WTC11 (cell line): ENCODE measurements at regions of chr1 and their contacts with region 1.

Region 1: GRCh38 chr1:205141236-205142101 is 19.7 kb upstream of the RBBP5 start:
- DNase-seq: peak; percentile 83
- ATAC-seq: peak; percentile 74
- H3K4me3 Mint-ChIP-seq: no peak overlapping the region
- H3K27ac Mint-ChIP-seq: no peak overlapping the region
- H3K4me1 Mint-ChIP-seq: peaks cover 23% of the 10 kb centered on the region
- H3K27me3 Mint-ChIP-seq: no peaks in the 10 kb centered on the region
- CTCF ChIP-seq: peak; percentile 70

Region 2: GRCh38 chr1:204842892-204843291 is 298.6 kb before region 1 on chr1:
- CTCF ChIA-PET with region 1: no interaction called
- POLR2A ChIA-PET with region 1: no interaction called
- DNase-seq: no peak
- ATAC-seq: no peak
- H3K4me3 Mint-ChIP-seq: no peak overlapping the region
- H3K27ac Mint-ChIP-seq: no peak overlapping the region
- H3K4me1 Mint-ChIP-seq: peaks cover 15% of the 10 kb centered on the region
- H3K27me3 Mint-ChIP-seq: no peaks in the 10 kb centered on the region
- CTCF ChIP-seq: no peak

Region 3: DNA sequence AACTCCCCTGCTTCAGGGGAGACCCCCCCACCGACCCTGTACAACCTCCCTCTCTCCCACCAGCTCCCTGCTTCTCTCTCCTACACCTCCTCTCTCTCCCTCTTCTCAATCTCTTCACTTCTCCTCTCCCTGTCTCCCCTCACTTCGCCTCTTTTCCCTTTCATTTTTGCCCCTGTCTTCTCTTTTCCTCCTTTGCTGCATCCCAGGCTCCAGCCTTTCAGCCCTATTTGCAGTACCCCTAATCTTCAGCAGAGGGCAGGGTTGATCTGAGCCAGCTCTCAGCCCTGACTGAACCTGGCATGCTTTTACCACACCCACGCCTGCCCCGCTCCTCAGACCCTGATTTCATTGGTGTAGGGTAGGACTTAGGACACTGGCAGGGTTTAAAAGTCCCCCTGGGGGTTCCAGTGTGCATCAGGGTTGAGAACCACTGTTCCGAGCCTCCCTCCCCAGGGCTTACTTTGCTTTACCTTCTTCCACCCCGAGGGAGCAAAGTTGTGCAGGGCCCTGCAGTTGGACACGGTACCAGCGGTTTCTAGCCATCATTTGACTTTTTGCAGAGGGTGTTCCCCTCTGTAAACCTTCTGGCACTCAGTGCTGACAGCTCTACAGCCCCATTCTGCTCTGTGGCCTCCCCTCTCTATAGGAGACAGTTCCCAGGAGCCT is 165.8 kb before region 1 on chr1:
- CTCF ChIA-PET with region 1: interaction called, 10 read pairs
- POLR2A ChIA-PET with region 1: no interaction called
- DNase-seq: peak; percentile 73
- ATAC-seq: peak; percentile 88
- H3K4me3 Mint-ChIP-seq: no peak overlapping the region
- H3K27ac Mint-ChIP-seq: no peak overlapping the region
- H3K4me1 Mint-ChIP-seq: no peaks in the 10 kb centered on the region
- H3K27me3 Mint-ChIP-seq: no peaks in the 10 kb centered on the region
- CTCF ChIP-seq: peak; percentile 84

Region 4: GRCh38 chr1:205121660-205122488 is 19.6 kb before region 1 on chr1 and contains the start of gene RBBP5:
- CTCF ChIA-PET with region 1: interaction called, 28 read pairs
- POLR2A ChIA-PET with region 1: no interaction called
- DNase-seq: peak; percentile 96
- ATAC-seq: peak; percentile 100
- H3K4me3 Mint-ChIP-seq: peak within 1 kb of the TSS; percentile 98
- H3K27ac Mint-ChIP-seq: peak within 1 kb of the TSS; percentile 100
- H3K4me1 Mint-ChIP-seq: peaks cover 18% of the 10 kb centered on the region
- H3K27me3 Mint-ChIP-seq: no peaks in the 10 kb centered on the region; the same call in 1 of the 2 replicates
- CTCF ChIP-seq: no peak
- total RNA-seq, gene RBBP5: 18.5 to 23.8 TPM (median 20.1 TPM) in 3 replicates

Region 5: DNA sequence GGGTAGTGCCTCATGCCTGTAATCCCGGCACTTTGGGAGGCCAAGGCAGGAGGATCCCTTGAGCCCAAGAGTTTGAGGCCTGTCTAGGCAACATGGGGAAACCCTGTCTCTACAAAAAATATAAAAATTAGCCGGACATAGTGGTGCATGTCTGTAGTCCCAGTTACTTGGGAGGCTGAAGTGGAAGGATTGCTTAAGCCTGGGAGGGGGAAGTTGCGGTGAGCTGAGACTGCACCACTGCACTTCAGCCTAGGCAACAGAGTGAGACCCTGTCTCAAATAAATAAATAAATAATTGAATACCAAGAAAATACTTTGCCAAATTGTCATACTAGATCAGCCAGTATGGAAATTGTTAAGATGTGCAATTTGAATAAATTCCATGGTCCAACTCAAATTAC is 13.8 kb before region 1 on chr1:
- CTCF ChIA-PET with region 1: interaction called, 28 read pairs
- POLR2A ChIA-PET with region 1: no interaction called
- DNase-seq: no peak
- ATAC-seq: no peak
- H3K4me3 Mint-ChIP-seq: no peak overlapping the region
- H3K27ac Mint-ChIP-seq: no peak overlapping the region
- H3K4me1 Mint-ChIP-seq: 0 out of 2 replicates have a peak, but pooled peaks cover 3% of the 10 kb centered on the region
- H3K27me3 Mint-ChIP-seq: no peaks in the 10 kb centered on the region
- CTCF ChIP-seq: no peak

Region 6: DNA sequence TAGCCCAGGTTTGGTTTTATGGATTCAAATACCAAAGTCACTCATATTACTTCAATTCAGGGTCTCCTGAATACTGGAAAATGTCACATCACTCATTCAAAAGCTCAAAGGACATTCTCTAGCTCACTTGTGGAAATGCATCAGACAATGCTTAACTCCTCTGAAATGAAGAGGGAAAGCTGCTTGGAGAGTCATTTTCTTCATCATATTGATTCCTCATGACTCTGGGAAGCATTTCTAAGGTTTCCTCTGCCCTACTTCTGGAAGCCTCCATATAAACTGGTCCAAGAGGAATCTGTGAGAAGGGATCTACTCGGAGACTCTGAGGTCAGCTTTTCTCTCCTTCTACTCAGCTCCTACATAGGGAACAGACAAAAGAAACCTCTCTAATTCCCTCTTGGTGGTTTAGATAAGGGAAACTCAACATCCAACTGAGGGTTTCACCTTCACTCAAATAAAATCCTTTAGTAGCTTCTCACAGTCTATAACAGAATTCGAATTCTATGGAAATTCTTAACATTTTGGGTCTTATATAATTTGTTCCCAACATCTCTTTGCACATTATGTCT is 16.7 kb after region 1 on chr1:
- CTCF ChIA-PET with region 1: interaction called, 10 read pairs
- POLR2A ChIA-PET with region 1: no interaction called
- DNase-seq: no peak
- ATAC-seq: no peak
- H3K4me3 Mint-ChIP-seq: no peak overlapping the region
- H3K27ac Mint-ChIP-seq: no peak overlapping the region
- H3K4me1 Mint-ChIP-seq: no peaks in the 10 kb centered on the region
- H3K27me3 Mint-ChIP-seq: no peaks in the 10 kb centered on the region
- CTCF ChIP-seq: no peak